ENCODE measurements at regions of chr17 and their contacts with region 1.

Region 1: DNA sequence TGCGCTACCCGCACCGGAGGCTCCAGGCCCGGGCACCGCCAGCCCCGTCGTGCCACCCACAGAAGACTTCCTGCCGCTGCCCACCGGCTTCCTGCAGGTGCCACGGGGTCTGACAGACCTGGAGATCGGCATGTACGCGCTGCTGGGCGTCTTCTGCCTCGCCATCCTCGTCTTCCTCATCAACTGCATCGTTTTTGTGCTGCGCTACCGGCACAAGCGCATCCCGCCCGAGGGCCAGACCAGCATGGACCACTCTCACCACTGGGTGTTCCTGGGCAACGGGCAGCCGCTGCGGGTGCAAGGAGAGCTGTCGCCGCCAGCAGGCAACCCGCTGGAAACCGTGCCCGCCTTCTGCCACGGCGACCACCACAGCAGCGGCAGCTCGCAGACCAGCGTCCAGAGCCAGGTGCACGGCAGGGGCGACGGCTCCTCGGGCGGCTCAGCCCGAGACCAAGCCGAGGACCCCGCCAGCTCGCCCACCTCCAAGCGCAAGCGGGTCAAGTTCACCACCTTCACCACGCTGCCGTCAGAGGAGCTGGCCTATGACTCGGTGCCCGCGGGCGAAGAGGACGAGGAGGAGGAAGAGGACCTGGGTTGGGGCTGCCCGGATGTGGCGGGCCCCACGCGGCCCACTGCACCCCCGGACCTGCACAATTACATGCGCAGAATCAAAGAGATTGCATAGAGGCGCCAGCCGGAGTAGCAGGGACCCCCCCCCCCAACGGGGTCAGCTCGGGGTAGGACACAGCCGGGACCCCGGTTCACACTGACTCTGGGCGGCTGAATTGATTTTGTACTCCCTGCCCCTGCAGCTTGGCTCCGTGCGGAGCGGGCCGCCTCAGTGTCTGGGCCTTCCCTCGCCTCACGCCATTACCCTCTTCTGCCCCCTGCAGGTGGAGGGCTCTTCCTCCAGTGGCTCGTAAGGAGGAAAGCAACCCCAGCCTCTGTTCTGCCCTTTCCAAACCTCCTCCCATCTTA is 58.5 kb downstream of the TMEM132E start:
- DNase-seq: peak; percentile 68
- H3K4me3 ChIP-seq: no peak overlapping the region
- H3K27ac ChIP-seq: no peak overlapping the region
- H3K4me1 ChIP-seq: peaks cover 3% of the 10 kb centered on the region
- H3K27me3 ChIP-seq: peaks cover 2 to 9% of the 10 kb centered on the region in 2 experiments
- CTCF ChIP-seq: peak; percentile 72 to 97
- POLR2A ChIP-seq: no peak

Region 2: DNA sequence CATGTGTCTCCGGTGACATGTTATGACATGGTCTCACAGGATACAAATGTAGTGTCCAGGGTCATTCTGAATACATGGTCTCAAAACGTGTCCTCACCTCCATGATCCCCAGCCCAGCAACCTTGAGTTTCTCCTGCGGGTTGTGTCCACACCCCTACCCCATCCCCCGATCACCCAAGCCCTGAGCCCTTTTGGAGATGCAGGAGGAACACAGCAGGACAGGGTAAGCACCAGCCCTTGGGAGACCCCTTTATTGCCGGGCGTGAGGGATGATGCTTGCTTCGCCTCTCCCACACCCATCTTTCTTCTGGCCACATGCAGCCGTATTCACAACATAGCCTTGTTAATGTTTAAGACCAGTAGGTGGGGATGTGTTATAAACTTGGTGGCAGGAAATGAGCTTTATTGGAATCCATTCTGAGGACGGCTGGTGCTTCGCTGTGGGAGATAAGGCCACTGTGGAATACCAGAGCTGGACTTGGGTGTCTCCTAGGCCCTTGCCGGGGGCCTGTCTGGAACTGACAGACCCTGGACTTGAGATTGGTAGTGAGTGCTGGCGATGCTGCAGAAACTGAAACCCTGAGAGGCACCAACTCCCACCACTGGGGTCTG is 52.9 kb before region 1 on chr17:
- CTCF ChIA-PET with region 1: interaction called, 8 read pairs
- POLR2A ChIA-PET with region 1: no interaction called
- dilution Hi-C with region 1: no loop called
- intact Hi-C with region 1: loop called (anchors 2 kb)
- DNase-seq: peak; percentile 4
- H3K4me3 ChIP-seq: no peak overlapping the region
- H3K27ac ChIP-seq: no peak overlapping the region
- H3K4me1 ChIP-seq: no peaks in the 10 kb centered on the region
- H3K27me3 ChIP-seq: peaks cover 47 to 49% of the 10 kb centered on the region in 2 experiments
- CTCF ChIP-seq: no peak
- POLR2A ChIP-seq: no peak